Right ventricle myocardium superior (tissue), 1 donor: ENCODE measurements at regions of chr6 and their contacts with region 1.

Region 1: DNA sequence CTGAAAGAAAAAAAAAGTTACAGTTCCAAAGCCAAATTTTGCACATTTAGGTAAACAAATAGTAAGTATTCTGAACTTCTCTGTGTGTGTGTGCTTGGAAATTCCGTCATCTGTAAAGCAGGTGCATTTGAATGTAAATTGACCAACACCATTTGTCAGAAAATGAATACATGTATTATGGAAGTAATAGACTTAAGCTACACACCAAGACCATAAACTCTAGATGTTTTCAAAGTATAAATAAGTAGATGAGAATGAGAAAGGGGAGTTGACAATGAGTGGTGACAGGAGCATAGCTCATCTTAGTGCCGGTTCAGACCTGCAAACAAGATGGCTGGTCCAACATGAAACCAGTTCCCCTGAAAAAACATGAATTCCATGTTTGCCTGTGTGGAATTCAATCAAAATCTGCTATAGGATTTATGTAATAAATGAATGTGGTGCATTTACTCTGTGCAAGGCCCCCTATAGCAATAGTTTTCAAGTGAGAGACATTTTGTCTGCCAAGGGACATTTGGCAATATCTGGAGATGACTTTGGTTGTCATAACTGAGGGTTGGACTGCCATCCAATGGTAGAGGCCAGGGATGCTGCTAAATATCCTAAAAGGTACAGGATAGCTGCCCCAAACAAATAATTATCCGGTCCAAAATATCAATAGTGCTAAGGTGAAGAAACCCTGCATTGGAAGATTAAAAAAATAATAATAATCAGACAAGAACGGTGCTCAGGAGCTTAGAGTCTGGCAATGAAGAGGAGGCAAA is 11.0 kb upstream of the FILIP1 start:
- DNase-seq: no peak
- ATAC-seq: peak; percentile 93

Region 2: GRCh38 chr6:75296811-75297779 is 207.6 kb before region 1 on chr6:
- intact Hi-C with region 1: loop called (anchors 5 kb)
- DNase-seq: no peak
- ATAC-seq: peak; percentile 42